GM12878 (cell line): ENCODE measurements at regions of chr2 and their contacts with region 1.

Region 1: DNA sequence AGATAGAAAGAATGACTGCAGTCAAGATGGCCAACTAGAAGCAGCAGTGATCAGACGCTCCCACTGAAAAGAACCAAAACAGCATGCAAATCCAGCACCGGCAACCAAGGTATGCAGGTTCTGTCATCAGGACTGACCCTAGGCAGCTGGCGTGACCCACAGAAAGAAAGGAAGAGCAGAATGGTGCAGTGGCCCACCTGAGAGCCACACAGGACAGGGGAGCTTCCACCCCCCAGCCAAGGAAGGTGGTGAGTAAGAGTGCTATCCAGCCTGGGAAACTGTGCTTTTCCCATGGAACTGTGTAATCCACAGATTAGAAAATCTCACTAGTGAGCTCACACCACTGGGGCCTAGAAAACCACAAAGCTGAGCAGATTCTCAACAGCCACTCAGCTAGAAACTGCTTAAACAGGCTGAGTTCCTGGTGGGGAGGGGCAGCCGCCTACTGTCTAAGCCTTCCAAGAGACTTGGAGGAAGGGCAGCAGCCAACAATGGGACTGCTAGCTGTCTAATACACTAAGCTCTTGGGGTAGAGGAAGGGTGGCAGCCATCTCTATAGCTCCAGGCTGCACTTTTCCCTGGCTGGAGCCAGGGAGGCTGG is 127.9 kb downstream of the EVA1A start:
- DNase-seq: peak; percentile 96
- ATAC-seq: peak; percentile 86
- H3K4me3 ChIP-seq: peak overlapping the region; percentile 31
- H3K27ac ChIP-seq: peak overlapping the region; percentile 95
- H3K4me1 ChIP-seq: peaks cover 45% of the 10 kb centered on the region
- H3K27me3 ChIP-seq: no peaks in the 10 kb centered on the region
- CTCF ChIP-seq: no peak
- EP300 ChIP-seq: peak; percentile 50 to 69; a peak in 2 of 4 replicates
- POLR2A ChIP-seq: peak; percentile 66
- RAD21 ChIP-seq: peak; percentile 40

Region 2: GRCh38 chr2:75076088-75076487 is 356.8 kb before region 1 on chr2:
- CTCF ChIA-PET with region 1: no interaction called
- POLR2A ChIA-PET with region 1: no interaction called
- RAD21 ChIA-PET with region 1: interaction called, 11 read pairs
- SMC1A ChIA-PET with region 1: interaction called, 3 read pairs
- in situ Hi-C with region 1: no loop called
- intact Hi-C with region 1: no loop called
- DNase-seq: no peak
- ATAC-seq: no peak
- H3K4me3 ChIP-seq: no peak overlapping the region
- H3K27ac ChIP-seq: no peak overlapping the region
- H3K4me1 ChIP-seq: peaks cover 8% of the 10 kb centered on the region
- H3K27me3 ChIP-seq: no peaks in the 10 kb centered on the region
- CTCF ChIP-seq: no peak
- EP300 ChIP-seq: no peak
- POLR2A ChIP-seq: no peak
- RAD21 ChIP-seq: no peak

Region 3: GRCh38 chr2:75342504-75343175 is 90.2 kb before region 1 on chr2:
- CTCF ChIA-PET with region 1: no interaction called
- POLR2A ChIA-PET with region 1: interaction called, 3 read pairs
- RAD21 ChIA-PET with region 1: interaction called, 14 read pairs
- SMC1A ChIA-PET with region 1: interaction called, 27 read pairs
- in situ Hi-C with region 1: no loop called
- intact Hi-C with region 1: no loop called
- DNase-seq: peak; percentile 35
- ATAC-seq: peak; percentile 85
- H3K4me3 ChIP-seq: no peak overlapping the region
- H3K27ac ChIP-seq: no peak overlapping the region
- H3K4me1 ChIP-seq: no peaks in the 10 kb centered on the region
- H3K27me3 ChIP-seq: no peaks in the 10 kb centered on the region
- CTCF ChIP-seq: no peak
- EP300 ChIP-seq: no peak
- POLR2A ChIP-seq: no peak
- RAD21 ChIP-seq: no peak

Region 4: DNA sequence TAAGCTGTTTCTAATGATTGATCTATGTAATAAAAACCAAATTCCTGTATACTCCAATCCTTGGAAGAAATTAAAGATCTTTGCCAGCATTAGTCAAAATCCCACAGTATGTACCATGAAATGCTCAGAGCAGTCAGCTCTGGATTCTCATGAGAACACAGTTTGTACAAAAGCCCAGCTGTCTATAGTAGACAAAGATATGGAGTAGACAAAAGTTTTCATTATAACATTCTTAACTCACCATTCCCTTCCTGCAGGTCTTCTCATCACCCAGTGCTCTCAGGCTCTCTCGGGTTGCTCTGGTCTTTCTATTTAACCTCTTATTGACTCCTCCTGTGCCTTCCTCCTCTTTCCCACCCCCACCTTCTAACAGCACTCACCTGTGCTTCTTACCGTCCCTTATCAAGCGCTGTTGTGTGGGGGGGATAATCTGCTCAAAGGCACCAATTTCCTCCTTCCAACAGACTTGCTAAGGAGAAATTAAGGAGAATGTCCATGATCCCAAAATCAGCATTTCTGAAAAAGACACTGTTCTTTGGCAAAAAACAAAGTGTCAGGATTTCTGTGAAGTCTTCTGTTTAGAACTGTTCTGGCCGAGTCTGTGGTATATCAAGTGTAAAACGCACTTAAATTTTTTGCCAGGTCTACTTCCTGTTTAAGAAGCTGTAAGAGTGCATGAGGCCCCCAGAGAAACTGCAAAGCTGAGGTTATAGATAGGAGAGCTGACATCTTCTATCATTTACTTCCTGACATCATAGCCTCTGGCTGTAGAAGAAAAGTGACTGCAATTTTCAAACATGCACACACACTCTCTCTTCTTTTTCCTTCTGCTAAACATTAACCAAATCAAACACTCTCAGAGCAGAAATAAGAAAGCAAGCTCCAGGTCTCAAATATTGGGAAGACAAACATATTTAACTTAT is 16.2 kb before region 1 on chr2:
- CTCF ChIA-PET with region 1: interaction called, 235 read pairs
- POLR2A ChIA-PET with region 1: interaction called, 157 read pairs
- RAD21 ChIA-PET with region 1: interaction called, 74 read pairs
- SMC1A ChIA-PET with region 1: interaction called, 244 read pairs
- in situ Hi-C with region 1: no loop called
- intact Hi-C with region 1: loop called (anchors 1 kb)
- DNase-seq: peak; percentile 38
- ATAC-seq: peak; percentile 85
- H3K4me3 ChIP-seq: peak overlapping the region; percentile 69
- H3K27ac ChIP-seq: peak overlapping the region; percentile 77
- H3K4me1 ChIP-seq: no peaks in the 10 kb centered on the region
- H3K27me3 ChIP-seq: no peaks in the 10 kb centered on the region
- CTCF ChIP-seq: no peak
- EP300 ChIP-seq: no peak
- POLR2A ChIP-seq: 0 out of 2 replicates have a peak, but pooled peaks have one; percentile 36
- RAD21 ChIP-seq: no peak

Region 5: GRCh38 chr2:75454241-75454620 is 21.4 kb after region 1 on chr2:
- CTCF ChIA-PET with region 1: interaction called, 5 read pairs
- POLR2A ChIA-PET with region 1: interaction called, 4 read pairs
- RAD21 ChIA-PET with region 1: interaction called, 4 read pairs
- SMC1A ChIA-PET with region 1: interaction called, 183 read pairs
- in situ Hi-C with region 1: no loop called
- intact Hi-C with region 1: no loop called
- DNase-seq: no peak
- ATAC-seq: no peak
- H3K4me3 ChIP-seq: no peak overlapping the region
- H3K27ac ChIP-seq: no peak overlapping the region
- H3K4me1 ChIP-seq: peaks cover 3% of the 10 kb centered on the region
- H3K27me3 ChIP-seq: no peaks in the 10 kb centered on the region
- CTCF ChIP-seq: no peak
- EP300 ChIP-seq: no peak
- POLR2A ChIP-seq: no peak
- RAD21 ChIP-seq: no peak